H1 (cell line): ENCODE measurements at regions of chr2 and their contacts with region 1.

Region 1: GRCh38 chr2:197168705-197169104 is 141.9 kb downstream of the ANKRD44 start:
- DNase-seq: peak in 1 of 2 experiments; percentile 87
- H3K4me3 ChIP-seq: no peak overlapping the region
- H3K27ac ChIP-seq: no peak overlapping the region
- H3K4me1 ChIP-seq: peaks cover 3 to 10% (median 8%) of the 10 kb centered on the region in 4 experiments; a peak in 4 of 7 replicates
- H3K27me3 ChIP-seq: 0 out of 7 replicates have a peak, but pooled peaks cover 0 to 4% (median 0%) of the 10 kb centered on the region in 4 experiments
- CTCF ChIP-seq: peak; percentile 84 to 96 (median 96)
- EP300 ChIP-seq: no peak
- POLR2A ChIP-seq: no peak
- RAD21 ChIP-seq: peak; percentile 90 to 92

Region 2: GRCh38 chr2:196500684-196501431 is 667.8 kb before region 1 on chr2:
- CTCF ChIA-PET with region 1: no interaction called
- POLR2A ChIA-PET with region 1: no interaction called
- DNase-seq: no peak
- H3K4me3 ChIP-seq: no peak overlapping the region
- H3K27ac ChIP-seq: no peak overlapping the region
- H3K4me1 ChIP-seq: no peaks in the 10 kb centered on the region
- H3K27me3 ChIP-seq: no peaks in the 10 kb centered on the region
- CTCF ChIP-seq: no peak
- EP300 ChIP-seq: no peak
- POLR2A ChIP-seq: no peak
- RAD21 ChIP-seq: no peak

Region 3: GRCh38 chr2:197011799-197012641 is 156.7 kb before region 1 on chr2:
- CTCF ChIA-PET with region 1: interaction called, 14 read pairs
- POLR2A ChIA-PET with region 1: no interaction called
- DNase-seq: no peak
- H3K4me3 ChIP-seq: no peak overlapping the region
- H3K27ac ChIP-seq: no peak overlapping the region
- H3K4me1 ChIP-seq: no peaks in the 10 kb centered on the region; a peak in 2 of 7 replicates
- H3K27me3 ChIP-seq: no peaks in the 10 kb centered on the region
- CTCF ChIP-seq: peak; percentile 35 to 92 (median 60)
- EP300 ChIP-seq: no peak
- POLR2A ChIP-seq: no peak
- RAD21 ChIP-seq: peak; percentile 67 to 69

Region 4: DNA sequence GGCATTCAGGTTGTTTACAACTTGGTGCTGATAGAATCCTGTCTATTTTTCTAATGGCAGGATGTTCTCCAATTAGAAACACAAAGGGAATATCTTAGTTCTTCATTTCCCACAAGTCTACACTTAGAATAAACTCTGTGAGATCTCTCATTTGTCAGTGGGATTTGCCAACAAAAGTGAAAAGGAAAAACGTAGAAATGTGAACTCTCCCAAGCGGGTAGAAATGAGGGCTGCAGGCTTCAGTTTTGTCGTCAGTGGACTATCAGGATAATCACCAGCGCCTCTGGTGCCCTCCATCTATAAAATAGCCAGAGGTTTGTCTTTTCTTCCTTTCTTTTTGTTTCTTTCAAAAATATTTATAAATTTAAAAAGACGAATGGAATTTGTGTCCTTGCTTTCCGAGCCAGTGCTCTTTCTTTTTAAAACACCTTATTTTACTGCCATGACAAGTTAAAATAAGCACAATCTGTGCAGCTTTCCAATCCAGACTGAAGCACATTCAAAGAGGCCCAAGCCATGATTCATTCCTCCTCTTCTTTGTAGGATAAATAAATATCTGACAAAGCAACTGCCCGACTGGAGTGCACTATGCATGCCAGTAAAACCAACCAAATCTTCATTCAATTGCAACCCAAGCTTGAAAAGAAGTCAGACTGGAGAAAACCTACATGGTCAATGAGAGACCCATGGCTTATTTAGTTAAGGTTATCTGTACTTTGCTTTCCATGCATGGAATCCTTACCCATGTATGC is 43.9 kb before region 1 on chr2:
- CTCF ChIA-PET with region 1: interaction called, 20 read pairs
- POLR2A ChIA-PET with region 1: interaction called, 4 read pairs
- DNase-seq: no peak
- H3K4me3 ChIP-seq: no peak overlapping the region
- H3K27ac ChIP-seq: no peak overlapping the region
- H3K4me1 ChIP-seq: no peaks in the 10 kb centered on the region
- H3K27me3 ChIP-seq: no peaks in the 10 kb centered on the region
- CTCF ChIP-seq: no peak
- EP300 ChIP-seq: no peak
- POLR2A ChIP-seq: no peak
- RAD21 ChIP-seq: no peak

Region 5: DNA sequence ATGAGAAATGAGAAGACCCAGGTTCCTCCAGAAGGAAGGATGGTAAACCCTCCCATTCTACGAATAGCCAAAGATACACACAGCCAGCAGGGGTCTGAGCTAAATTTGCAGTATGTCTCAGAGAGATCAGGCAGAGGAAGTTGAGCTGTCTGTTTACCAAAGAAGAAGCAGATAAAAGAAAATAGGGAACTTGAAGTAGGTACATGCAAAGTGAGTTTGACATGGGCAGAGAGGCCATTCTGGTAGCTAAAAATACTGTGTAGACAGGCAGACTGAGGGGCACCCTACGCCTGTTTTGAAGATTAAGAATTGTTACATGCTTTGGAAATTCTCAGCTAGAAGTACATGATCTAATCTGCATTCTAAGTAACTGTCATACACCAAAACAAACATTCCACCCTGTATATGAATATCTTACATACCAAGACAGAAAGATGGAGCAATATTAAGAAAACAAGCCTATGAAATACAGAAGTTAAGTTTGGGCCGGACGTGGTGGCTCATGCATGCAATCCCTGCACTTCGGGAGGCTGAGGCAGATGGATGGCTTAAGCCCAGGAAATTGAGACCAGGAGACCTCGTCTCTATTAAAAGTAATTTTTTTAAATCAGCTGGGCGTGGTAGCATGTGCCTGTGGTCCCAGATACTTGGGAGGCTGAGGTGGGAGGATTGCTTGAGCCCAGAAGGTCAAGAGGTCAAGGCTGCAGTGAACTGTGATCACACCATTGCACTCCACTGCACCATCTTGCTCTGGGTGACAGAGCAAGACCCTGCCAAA is 16.1 kb before region 1 on chr2:
- CTCF ChIA-PET with region 1: interaction called, 24 read pairs
- POLR2A ChIA-PET with region 1: no interaction called
- DNase-seq: no peak
- H3K4me3 ChIP-seq: no peak overlapping the region
- H3K27ac ChIP-seq: no peak overlapping the region
- H3K4me1 ChIP-seq: peaks cover 0 to 3% (median 1%) of the 10 kb centered on the region in 4 experiments; a peak in 3 of 7 replicates
- H3K27me3 ChIP-seq: no peaks in the 10 kb centered on the region
- CTCF ChIP-seq: no peak
- EP300 ChIP-seq: no peak
- POLR2A ChIP-seq: no peak
- RAD21 ChIP-seq: no peak

Region 6: DNA sequence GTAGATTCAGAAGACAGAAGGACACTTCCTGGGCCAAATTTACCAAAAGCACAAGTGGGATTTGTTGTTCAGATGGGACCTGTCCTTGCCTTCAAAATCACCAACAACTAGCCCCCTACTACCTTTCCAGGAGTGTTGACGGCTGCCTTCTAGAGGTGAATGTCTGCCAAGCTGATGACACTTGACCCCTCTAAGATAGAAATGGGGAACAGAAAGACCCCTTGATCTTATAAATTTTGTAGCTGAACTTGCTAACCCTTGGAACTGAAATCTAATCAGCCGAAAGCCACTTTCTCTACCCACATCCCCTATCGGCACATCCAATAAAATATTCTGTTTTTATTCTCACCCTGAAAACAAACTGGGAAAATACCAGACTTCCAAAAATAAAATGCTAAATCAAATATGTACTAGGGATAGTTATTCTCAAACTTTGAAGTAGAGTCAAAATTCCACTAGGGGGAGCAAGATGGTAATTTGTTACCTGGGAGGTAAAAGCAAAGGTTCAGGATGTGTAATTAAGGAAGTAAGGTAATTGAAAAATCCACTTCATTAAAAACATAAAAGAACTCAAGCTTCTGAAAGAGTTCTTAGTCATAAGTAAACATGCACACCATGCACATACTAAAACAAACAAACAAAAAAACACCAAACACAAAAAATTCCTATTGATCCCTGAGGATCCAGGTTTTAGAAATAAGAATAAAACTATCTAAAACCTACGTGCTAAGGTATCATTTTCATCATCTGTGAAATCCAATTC is 22.7 kb after region 1 on chr2:
- CTCF ChIA-PET with region 1: interaction called, 40 read pairs
- POLR2A ChIA-PET with region 1: no interaction called
- DNase-seq: no peak
- H3K4me3 ChIP-seq: no peak overlapping the region
- H3K27ac ChIP-seq: no peak overlapping the region
- H3K4me1 ChIP-seq: peaks cover 0 to 6% (median 2%) of the 10 kb centered on the region in 4 experiments; a peak in 1 of 7 replicates
- H3K27me3 ChIP-seq: no peaks in the 10 kb centered on the region
- CTCF ChIP-seq: peak in 2 of 3 experiments; percentile 36 to 45; a peak in 2 of 4 replicates
- EP300 ChIP-seq: no peak
- POLR2A ChIP-seq: no peak
- RAD21 ChIP-seq: peak; percentile 59 to 68